ENCODE measurements at regions of chr11 and their contacts with region 1.

Region 1: DNA sequence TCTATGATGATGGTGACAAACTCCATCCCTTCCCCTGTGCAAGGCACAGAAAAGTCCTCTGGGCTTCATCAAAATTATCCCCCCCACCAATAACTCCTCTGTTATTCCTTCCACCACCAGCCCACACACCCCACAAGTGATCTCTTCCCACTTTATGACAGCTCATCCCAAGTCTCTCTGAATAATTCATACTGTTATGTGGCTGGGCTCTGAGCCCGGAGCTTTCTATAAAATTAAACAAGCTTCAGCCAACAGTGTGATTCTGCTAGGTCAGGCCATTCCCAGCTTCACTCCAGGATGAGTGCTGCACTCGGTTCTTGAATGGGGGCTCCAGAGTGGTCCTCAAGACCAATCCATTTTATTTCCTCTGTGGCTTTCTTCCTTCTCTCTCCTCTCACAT is 83.0 kb downstream of the INSC start:
- DNase-seq: no peak
- H3K4me3 ChIP-seq: no peak overlapping the region
- H3K27ac ChIP-seq: no peak overlapping the region
- H3K4me1 ChIP-seq: no peaks in the 10 kb centered on the region
- H3K27me3 ChIP-seq: peaks cover 0 to 4% (median 0%) of the 10 kb centered on the region in 5 experiments

Region 2: GRCh38 chr11:15208378-15209222 is 10.9 kb after region 1 on chr11:
- CTCF ChIA-PET with region 1: interaction called, 10 read pairs
- POLR2A ChIA-PET with region 1: no interaction called
- DNase-seq: peak; percentile 48 to 73 (median 66)
- H3K4me3 ChIP-seq: no peak overlapping the region
- H3K27ac ChIP-seq: no peak overlapping the region
- H3K4me1 ChIP-seq: no peaks in the 10 kb centered on the region
- H3K27me3 ChIP-seq: peaks cover 0 to 6% (median 3%) of the 10 kb centered on the region in 5 experiments